Activated naive CD4-positive, alpha-beta T cell treated with anti-CD3 and anti-CD28 coated beads, Interleukin-2, amount 10 ng/mL, durations not matched to agents 7 days and 5 days (primary cell): ENCODE measurements at regions of chr9 and their contacts with region 1.

Region 1: DNA sequence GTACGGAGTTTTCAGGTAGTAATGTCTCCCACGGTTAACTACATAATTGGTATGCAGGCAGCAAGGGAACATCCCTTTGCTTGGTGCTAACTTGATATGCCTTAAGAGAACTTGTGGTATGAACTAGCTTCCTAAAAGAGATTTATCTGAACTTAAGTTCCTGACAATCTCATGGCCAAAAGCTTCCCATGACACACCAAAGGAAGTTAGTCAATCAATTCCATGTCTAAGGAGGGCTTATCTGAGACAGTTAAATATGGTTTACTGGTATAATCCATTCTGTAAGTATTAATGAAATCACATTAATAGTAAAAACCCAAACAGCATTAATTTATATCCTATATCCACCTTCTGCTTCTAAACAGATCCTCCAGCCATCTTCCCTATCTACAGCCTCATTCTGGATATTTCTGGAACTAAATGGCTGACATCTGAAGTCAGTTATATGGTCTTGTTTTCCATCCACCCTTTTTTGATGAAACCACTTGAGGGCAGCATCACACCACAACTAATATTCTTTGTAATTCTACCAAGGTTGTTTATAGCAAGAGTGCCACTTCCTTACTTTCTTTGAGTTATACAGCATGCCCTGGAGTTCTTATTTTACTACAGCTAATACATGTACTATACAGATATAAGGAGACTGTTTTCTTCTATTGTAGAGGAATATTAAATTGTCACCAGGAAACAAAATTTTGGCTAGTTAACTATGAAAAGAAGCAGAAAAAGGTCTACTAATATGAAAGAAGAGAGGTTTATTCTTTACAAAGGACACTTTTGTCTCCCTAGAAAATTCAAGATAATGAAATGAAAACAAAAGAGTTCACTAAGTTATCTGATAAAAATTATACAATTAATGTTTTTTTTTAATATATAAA is 34.7 kb downstream of the SHOC1 start:
- DNase-seq: peak; percentile 63
- H3K4me3 Mint-ChIP-seq: no peak overlapping the region
- H3K27ac Mint-ChIP-seq: no peak overlapping the region
- H3K4me1 Mint-ChIP-seq: peaks cover 4% of the 10 kb centered on the region
- H3K27me3 Mint-ChIP-seq: no peaks in the 10 kb centered on the region

Region 2: GRCh38 chr9:112074250-112075008 is 314.4 kb after region 1 on chr9:
- CTCF ChIA-PET with region 1: interaction called, 105 read pairs
- DNase-seq: peak; percentile 83
- H3K4me3 Mint-ChIP-seq: no peak overlapping the region
- H3K27ac Mint-ChIP-seq: peak overlapping the region; percentile 51
- H3K4me1 Mint-ChIP-seq: peaks cover 27% of the 10 kb centered on the region
- H3K27me3 Mint-ChIP-seq: no peaks in the 10 kb centered on the region

Region 3: GRCh38 chr9:112086627-112087026 is 326.6 kb after region 1 on chr9:
- CTCF ChIA-PET with region 1: interaction called, 10 read pairs
- DNase-seq: no peak
- H3K4me3 Mint-ChIP-seq: no peak overlapping the region
- H3K27ac Mint-ChIP-seq: no peak overlapping the region
- H3K4me1 Mint-ChIP-seq: peaks cover 6% of the 10 kb centered on the region
- H3K27me3 Mint-ChIP-seq: no peaks in the 10 kb centered on the region

Region 4: DNA sequence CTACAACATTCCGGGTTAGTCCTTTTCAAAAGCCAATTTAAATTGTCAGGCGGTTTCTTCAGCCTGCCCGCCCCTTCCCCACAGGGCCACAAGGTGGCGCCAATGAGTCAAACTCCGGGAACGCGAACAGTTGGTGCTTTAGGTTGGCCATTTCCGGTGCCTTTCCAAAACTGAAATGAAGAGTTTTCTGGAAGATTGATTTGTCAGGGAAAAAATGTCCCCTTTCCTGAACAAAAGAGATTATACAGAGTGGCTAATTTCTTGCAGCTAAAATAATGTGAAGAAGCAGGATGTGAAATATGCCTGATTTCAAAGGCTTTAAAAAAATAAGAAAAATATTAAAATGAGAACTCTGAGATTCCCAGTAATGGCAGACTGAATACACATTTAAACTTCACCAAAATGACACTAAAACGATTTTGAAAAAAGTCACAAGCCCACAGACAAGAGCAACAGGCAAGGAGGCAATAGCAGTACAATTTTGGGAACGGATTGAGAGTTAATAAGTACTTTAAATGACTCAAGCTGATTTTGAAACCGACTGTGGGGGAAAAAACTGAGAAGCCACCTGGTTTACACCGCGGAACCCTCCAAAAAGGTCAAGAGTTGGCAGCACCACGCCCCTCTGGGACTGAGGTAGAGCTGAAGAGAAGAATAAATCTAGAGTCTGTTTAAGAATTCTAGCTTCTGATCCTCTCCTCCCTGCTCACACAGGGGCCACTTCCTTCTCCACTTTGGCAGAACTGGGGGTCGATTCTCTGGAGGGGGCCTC is 1085.0 kb after region 1 on chr9:
- CTCF ChIA-PET with region 1: no interaction called
- DNase-seq: peak; percentile 76
- H3K4me3 Mint-ChIP-seq: no peak overlapping the region
- H3K27ac Mint-ChIP-seq: no peak overlapping the region
- H3K4me1 Mint-ChIP-seq: peaks cover 16% of the 10 kb centered on the region
- H3K27me3 Mint-ChIP-seq: no peaks in the 10 kb centered on the region